Activated CD4-positive, alpha-beta T cell treated with anti-CD3 and anti-CD28 coated beads, Interleukin-2, amount 10 ng/mL, durations not matched to agents 7 days and 5 days (primary cell): ENCODE measurements at regions of chr6 and their contacts with region 1.

Region 1: GRCh38 chr6:44116641-44117382 is 10.4 kb downstream of the MRPL14 start:
- DNase-seq: no peak
- H3K4me3 Mint-ChIP-seq: no peak overlapping the region
- H3K27ac Mint-ChIP-seq: peak overlapping the region; percentile 63
- H3K4me1 Mint-ChIP-seq: peaks cover 50% of the 10 kb centered on the region
- H3K27me3 Mint-ChIP-seq: no peaks in the 10 kb centered on the region

Region 2: DNA sequence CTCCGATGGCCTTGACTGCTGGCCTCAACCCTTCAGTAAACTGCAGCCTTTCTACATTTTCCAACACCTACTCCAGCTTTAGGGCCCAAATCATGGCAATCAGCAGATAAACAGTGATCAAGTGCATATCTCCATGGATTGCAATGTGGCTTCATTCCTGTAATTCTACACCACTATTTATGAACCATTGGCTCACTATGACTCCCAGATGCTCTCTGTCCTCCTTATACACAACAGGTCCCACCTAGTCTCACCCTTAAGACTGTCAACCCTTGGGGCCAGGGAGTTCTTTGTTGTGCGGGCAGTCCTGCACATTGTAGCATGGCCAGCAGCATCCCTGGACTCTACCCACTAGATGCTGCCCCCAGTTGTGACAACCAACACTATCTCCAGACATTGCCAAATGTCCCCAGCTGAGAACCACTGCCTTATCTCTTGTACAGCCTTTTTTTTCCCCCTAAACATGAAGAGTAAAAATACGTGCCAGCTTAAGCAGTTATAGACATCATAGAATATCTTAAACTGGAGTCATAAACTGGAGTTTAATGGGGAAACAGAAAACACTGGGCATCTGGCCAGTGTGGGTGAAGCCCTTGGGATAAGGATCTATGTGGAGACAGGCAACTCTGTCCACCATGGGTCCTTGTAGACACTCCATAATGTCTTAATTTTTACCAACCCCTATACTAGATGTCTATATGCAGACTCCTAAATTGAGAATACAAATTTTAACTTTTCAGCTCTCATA is 10.6 kb before region 1 on chr6:
- CTCF ChIA-PET with region 1: interaction called, 14 read pairs
- POLR2A ChIA-PET with region 1: no interaction called
- DNase-seq: no peak
- H3K4me3 Mint-ChIP-seq: no peak overlapping the region
- H3K27ac Mint-ChIP-seq: no peak overlapping the region
- H3K4me1 Mint-ChIP-seq: peaks cover 20% of the 10 kb centered on the region
- H3K27me3 Mint-ChIP-seq: no peaks in the 10 kb centered on the region

Region 3: GRCh38 chr6:44138717-44139350 is 22.0 kb after region 1 on chr6:
- CTCF ChIA-PET with region 1: no interaction called
- POLR2A ChIA-PET with region 1: no interaction called
- DNase-seq: no peak
- H3K4me3 Mint-ChIP-seq: no peak overlapping the region
- H3K27ac Mint-ChIP-seq: no peak overlapping the region
- H3K4me1 Mint-ChIP-seq: no peaks in the 10 kb centered on the region
- H3K27me3 Mint-ChIP-seq: no peaks in the 10 kb centered on the region

Region 4: DNA sequence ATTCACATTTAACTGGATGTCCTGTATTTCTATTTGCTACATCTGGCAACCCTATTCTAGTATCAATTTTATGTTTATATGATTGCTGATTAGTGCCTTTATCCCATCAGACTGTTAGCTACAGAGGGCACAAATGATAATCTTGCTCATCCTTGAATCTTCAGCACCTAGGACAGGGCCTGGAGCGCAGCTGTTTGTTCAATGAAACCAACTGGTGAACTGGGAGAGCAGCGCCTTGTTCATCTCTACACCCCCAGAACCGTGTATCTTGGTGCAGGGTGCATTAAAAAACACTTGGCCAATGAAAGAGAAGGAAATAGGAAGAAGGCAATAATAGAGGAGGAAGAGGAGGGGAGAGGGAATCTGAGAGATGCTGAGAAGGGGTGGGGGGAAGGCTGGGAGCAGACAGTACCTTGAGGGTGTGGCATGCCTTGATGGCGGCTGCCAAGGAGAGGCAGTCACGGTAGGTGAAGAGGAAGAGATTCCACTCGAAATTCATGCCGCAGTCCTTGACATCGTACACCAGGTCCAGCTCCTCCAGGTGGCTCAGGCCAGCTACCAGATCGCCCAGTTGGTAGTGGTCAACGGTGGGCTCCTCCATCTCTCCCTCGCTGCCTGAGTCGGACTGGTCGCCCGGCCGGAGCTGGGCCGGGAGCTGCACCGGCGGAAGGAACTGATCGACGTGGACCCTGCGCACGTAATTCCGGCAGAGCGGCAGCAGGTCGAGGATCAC is 168.9 kb after region 1 on chr6:
- CTCF ChIA-PET with region 1: no interaction called
- POLR2A ChIA-PET with region 1: no interaction called
- DNase-seq: no peak
- H3K4me3 Mint-ChIP-seq: no peak overlapping the region
- H3K27ac Mint-ChIP-seq: no peak overlapping the region
- H3K4me1 Mint-ChIP-seq: no peaks in the 10 kb centered on the region
- H3K27me3 Mint-ChIP-seq: peaks cover 39% of the 10 kb centered on the region